PC-9 (cell line): ENCODE measurements at regions of chr6 and their contacts with region 1.

Region 1: GRCh38 chr6:154448448-154449096 is 61.9 kb downstream of the CNKSR3 start:
- DNase-seq: no peak
- H3K4me3 ChIP-seq: no peak overlapping the region
- H3K27ac ChIP-seq: no peak overlapping the region
- H3K4me1 ChIP-seq: no peaks in the 10 kb centered on the region
- H3K27me3 ChIP-seq: no peaks in the 10 kb centered on the region
- CTCF ChIP-seq: no peak

Region 2: DNA sequence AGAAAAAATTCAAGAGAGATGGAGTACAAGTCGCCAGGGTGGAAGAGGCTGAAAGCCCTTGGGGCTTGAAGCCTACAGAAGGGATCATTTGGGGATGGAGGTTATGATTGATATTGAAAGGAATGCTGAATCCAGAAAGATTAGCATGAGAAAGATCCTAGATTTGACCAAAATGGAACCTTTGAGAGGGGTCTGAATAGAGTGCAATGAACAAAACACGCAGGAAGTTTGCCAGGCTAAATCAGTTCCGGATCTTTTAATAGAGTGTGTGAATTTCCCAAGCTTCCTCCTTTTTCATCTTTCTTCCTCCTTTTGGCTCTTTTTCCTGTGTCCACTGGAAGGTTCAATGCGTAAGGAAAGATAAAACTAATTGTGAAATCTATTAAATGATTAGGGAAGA is 107.2 kb before region 1 on chr6:
- CTCF ChIA-PET with region 1: no interaction called
- POLR2A ChIA-PET with region 1: no interaction called
- intact Hi-C with region 1: no loop called
- DNase-seq: no peak
- H3K4me3 ChIP-seq: no peak overlapping the region
- H3K27ac ChIP-seq: no peak overlapping the region
- H3K4me1 ChIP-seq: 0 out of 2 replicates have a peak, but pooled peaks cover 4% of the 10 kb centered on the region
- H3K27me3 ChIP-seq: no peaks in the 10 kb centered on the region
- CTCF ChIP-seq: no peak

Region 3: GRCh38 chr6:154359161-154359574 is 89.4 kb before region 1 on chr6:
- CTCF ChIA-PET with region 1: no interaction called
- POLR2A ChIA-PET with region 1: interaction called, 11 read pairs
- intact Hi-C with region 1: no loop called
- DNase-seq: no peak
- H3K4me3 ChIP-seq: no peak overlapping the region
- H3K27ac ChIP-seq: no peak overlapping the region
- H3K4me1 ChIP-seq: no peaks in the 10 kb centered on the region
- H3K27me3 ChIP-seq: no peaks in the 10 kb centered on the region
- CTCF ChIP-seq: no peak

Region 4: GRCh38 chr6:154537511-154538325 is 89.1 kb after region 1 on chr6:
- CTCF ChIA-PET with region 1: no interaction called
- POLR2A ChIA-PET with region 1: no interaction called
- intact Hi-C with region 1: no loop called
- DNase-seq: no peak
- H3K4me3 ChIP-seq: no peak overlapping the region
- H3K27ac ChIP-seq: no peak overlapping the region
- H3K4me1 ChIP-seq: no peaks in the 10 kb centered on the region
- H3K27me3 ChIP-seq: no peaks in the 10 kb centered on the region
- CTCF ChIP-seq: no peak